Activated CD8-positive, alpha-beta T cell treated with anti-CD3 and anti-CD28 coated beads for 36 hours (primary cell): ENCODE measurements at regions of chr1 and their contacts with region 1.

Region 1: DNA sequence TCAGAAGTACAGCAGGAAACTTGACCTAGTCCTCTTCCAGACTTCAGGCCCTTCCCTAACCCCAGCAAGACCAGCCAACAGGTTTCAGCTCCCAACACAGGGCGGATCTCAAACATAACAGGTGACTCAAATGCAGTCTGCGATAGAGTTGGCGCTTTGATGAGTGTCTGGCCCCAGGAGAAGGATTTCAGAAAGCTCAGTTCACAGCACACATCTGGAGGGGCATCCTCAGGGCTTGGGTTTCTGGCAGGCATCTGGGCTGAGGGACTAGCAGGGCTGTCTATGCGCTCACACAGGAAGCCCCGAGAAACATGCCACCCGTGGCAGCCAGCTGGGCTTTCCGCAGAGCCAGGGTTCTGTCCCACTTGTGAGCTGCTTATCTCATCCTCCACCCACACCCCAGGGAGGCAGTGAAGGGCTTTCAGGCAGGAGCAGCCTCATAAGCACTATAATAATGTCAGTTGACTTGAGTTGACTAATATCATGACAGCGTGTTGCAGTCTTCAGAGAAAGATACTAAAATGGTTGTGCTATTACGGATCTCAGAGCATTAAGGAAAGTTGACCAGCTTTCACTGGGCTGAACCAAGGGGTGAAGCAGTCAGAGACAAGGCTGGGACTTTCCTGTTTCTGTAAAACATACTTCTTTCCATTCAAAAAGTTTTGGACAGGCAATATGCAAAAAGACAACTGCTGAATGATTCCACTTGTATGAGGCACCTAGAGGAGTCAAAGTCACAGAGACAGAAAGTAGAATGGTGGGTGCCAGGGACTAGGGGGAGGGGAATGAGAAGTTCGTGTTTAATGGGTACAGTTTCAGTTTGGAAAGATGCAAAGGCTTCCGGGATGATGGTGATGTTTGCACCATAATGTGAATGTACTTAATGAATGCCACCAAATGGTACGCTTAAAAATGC is 233.0 kb upstream of the IRF2BP2 start:
- DNase-seq: peak; percentile 96
- ATAC-seq: peak; percentile 85
- H3K4me3 Mint-ChIP-seq: peak overlapping the region; percentile 57
- H3K27ac Mint-ChIP-seq: peak overlapping the region; percentile 94
- H3K4me1 Mint-ChIP-seq: peaks cover 82% of the 10 kb centered on the region
- H3K27me3 Mint-ChIP-seq: no peaks in the 10 kb centered on the region
- CTCF ChIP-seq: no peak

Region 2: DNA sequence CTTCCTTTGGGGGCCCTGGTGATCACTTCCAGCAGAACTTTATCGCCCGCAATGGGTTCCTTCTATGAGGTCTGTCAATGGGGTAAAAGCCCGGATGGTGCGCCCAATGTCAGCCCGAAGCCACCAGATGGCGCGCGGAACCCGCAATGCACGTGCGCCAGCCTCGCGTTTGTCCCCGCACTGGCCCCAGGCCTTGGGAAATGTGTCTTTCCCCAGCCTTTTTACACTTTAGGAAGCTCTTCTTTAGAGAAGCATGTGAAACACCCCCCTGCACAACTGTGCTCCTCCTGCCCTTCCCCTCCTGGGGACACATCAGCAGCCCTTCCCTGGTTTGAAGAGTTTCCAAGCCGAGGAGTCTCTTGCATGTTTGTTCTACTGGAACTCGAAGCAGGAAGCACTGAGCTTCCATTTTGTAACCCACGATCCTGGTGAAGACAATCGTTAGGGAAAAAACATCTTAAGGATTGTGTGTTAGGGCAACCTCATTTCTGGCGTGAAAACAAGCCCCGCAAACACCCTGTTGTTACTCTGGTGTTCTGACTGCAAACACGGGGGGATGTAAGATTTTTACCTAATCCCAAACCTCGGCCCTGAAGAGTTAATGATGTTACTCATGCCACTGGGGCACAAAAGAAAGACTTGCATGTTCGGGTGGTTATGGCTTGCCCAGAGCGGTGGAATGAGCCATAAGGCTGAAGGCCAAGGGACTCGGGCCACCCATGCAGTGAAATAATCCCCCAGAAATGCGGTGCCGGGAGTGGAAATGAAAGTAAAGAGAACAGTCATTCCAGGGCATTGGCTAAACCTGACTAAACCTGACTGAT is 343.7 kb before region 1 on chr1:
- CTCF ChIA-PET with region 1: no interaction called
- POLR2A ChIA-PET with region 1: no interaction called
- intact Hi-C with region 1: loop called (anchors 10 kb)
- DNase-seq: peak; percentile 91
- ATAC-seq: peak; percentile 63
- H3K4me3 Mint-ChIP-seq: no peak overlapping the region
- H3K27ac Mint-ChIP-seq: peak overlapping the region; percentile 82
- H3K4me1 Mint-ChIP-seq: peaks cover 64% of the 10 kb centered on the region
- H3K27me3 Mint-ChIP-seq: peaks cover 6% of the 10 kb centered on the region
- CTCF ChIP-seq: peak; percentile 98

Region 3: GRCh38 chr1:234722904-234723720 is 119.9 kb before region 1 on chr1:
- CTCF ChIA-PET with region 1: interaction called, 5 read pairs
- POLR2A ChIA-PET with region 1: interaction called, 18 read pairs
- intact Hi-C with region 1: no loop called
- DNase-seq: peak; percentile 89
- ATAC-seq: peak; percentile 63
- H3K4me3 Mint-ChIP-seq: peak overlapping the region; percentile 74
- H3K27ac Mint-ChIP-seq: peak overlapping the region; percentile 99
- H3K4me1 Mint-ChIP-seq: peaks cover 70% of the 10 kb centered on the region
- H3K27me3 Mint-ChIP-seq: no peaks in the 10 kb centered on the region
- CTCF ChIP-seq: no peak

Region 4: GRCh38 chr1:234730770-234731568 is 112.0 kb before region 1 on chr1:
- CTCF ChIA-PET with region 1: interaction called, 5 read pairs
- POLR2A ChIA-PET with region 1: interaction called, 18 read pairs
- intact Hi-C with region 1: loop called (anchors 2 kb)
- DNase-seq: peak; percentile 83
- ATAC-seq: peak; percentile 87
- H3K4me3 Mint-ChIP-seq: peak overlapping the region; percentile 47
- H3K27ac Mint-ChIP-seq: peak overlapping the region; percentile 94
- H3K4me1 Mint-ChIP-seq: peaks cover 77% of the 10 kb centered on the region
- H3K27me3 Mint-ChIP-seq: no peaks in the 10 kb centered on the region
- CTCF ChIP-seq: peak; percentile 33

Region 5: DNA sequence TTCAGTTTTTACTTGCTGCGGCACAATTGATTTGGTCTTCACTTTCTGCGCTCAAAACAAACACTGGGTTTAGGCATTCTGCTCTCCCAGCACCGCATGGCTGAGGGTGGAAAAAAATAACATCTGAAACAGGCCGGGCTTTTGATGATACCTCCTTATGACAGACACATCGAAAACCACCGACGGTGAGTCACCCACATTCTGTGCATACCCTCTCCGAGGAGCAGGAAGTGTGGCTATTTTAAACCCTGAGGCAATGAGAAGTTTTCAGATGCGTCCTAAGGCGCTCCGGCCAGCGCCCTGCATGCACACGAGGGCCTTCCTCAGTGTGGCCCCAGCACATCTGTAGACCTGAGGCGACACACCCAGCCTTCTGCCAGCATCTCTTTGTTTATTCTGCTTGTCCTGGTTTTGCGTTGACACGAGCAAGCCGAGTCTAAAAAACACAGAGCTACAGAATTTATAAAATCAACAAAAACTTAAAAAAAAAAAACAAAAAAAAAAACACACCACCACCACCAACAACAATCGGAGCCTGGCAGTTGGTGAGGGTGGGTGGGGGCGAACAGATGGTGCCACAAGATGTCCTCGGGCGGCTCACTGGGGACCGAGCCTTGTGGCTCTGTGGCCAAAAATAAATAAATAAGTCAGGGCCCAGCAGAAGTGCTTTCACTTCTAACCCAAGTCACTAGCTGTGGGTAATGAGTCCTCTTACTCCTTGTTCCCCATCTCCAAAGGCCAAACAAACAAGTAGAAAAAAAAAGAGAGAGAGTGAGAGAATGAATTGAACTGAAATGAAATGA is 70.4 kb before region 1 on chr1:
- CTCF ChIA-PET with region 1: interaction called, 4 read pairs
- POLR2A ChIA-PET with region 1: interaction called, 8 read pairs
- intact Hi-C with region 1: loop called (anchors 1 kb)
- DNase-seq: peak; percentile 98
- ATAC-seq: peak; percentile 72
- H3K4me3 Mint-ChIP-seq: peak overlapping the region; percentile 57
- H3K27ac Mint-ChIP-seq: peak overlapping the region; percentile 93
- H3K4me1 Mint-ChIP-seq: peaks cover 60% of the 10 kb centered on the region
- H3K27me3 Mint-ChIP-seq: no peaks in the 10 kb centered on the region
- CTCF ChIP-seq: no peak

Region 6: GRCh38 chr1:234963180-234963903 is 120.4 kb after region 1 on chr1:
- CTCF ChIA-PET with region 1: interaction called, 3 read pairs
- POLR2A ChIA-PET with region 1: interaction called, 10 read pairs
- intact Hi-C with region 1: loop called (anchors 5 kb)
- DNase-seq: peak; percentile 98
- ATAC-seq: peak; percentile 79
- H3K4me3 Mint-ChIP-seq: peak overlapping the region; percentile 56
- H3K27ac Mint-ChIP-seq: peak overlapping the region; percentile 93
- H3K4me1 Mint-ChIP-seq: peaks cover 70% of the 10 kb centered on the region
- H3K27me3 Mint-ChIP-seq: no peaks in the 10 kb centered on the region
- CTCF ChIP-seq: no peak

Region 7: DNA sequence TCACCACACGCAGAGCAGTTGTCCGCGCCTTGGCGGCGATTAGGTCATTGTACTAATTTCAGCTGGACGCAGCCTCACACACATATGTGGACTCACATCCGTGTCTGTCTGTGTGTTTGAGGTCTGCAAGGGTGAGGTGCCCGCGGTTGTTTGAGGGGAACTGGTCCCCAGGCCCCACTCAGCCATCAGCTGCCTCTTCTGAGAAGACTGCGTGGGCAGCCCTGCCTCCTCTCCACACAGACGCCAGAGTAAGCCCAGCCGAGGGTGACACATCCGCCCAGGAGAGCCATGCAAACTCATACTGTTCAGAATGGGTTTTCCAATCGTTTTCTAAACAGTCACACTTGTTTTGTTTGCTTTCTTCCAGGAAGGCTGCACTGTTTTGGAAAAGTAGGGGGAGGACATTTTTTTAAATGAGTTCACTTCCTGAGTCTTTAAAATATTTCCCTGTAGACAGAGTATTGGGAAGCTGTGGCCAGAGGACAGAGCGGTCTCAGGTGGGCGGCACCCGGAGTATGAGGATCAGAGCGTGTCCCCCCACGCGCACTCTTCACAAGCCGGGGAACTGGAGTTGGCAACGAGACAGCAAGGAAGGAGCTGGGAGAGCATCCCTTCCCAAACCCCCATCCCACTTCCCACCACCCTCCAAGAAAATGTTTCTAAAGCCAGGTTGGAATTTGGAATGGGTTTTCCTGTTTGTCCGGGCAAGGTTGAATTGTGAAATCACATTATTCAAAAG is 232.4 kb after region 1 on chr1:
- CTCF ChIA-PET with region 1: no interaction called
- POLR2A ChIA-PET with region 1: interaction called, 4 read pairs
- intact Hi-C with region 1: loop called (anchors 5 kb)
- DNase-seq: peak; percentile 86
- ATAC-seq: peak; percentile 56
- H3K4me3 Mint-ChIP-seq: peak overlapping the region; percentile 51
- H3K27ac Mint-ChIP-seq: peak overlapping the region; percentile 96
- H3K4me1 Mint-ChIP-seq: peaks cover 31% of the 10 kb centered on the region
- H3K27me3 Mint-ChIP-seq: no peaks in the 10 kb centered on the region
- CTCF ChIP-seq: no peak